Panc1 (cell line): ENCODE measurements at regions of chr17 and their contacts with region 1.

Region 1: GRCh38 chr17:42997984-42998938 is at the start of gene RPL27:
- DNase-seq: peak; percentile 94
- ATAC-seq: peak; percentile 98
- H3K4me3 ChIP-seq: peak within 1 kb of the TSS; percentile 79 to 96
- H3K27ac ChIP-seq: peak within 1 kb of the TSS; percentile 92
- H3K4me1 ChIP-seq: peaks cover 19% of the 10 kb centered on the region
- H3K27me3 ChIP-seq: no peaks in the 10 kb centered on the region
- CTCF ChIP-seq: peak; percentile 76
- total RNA-seq, gene RPL27: 513 TPM

Region 2: GRCh38 chr17:42744806-42745617 is 253.2 kb before region 1 on chr17 and contains the start of gene EZH1:
- CTCF ChIA-PET with region 1: no interaction called
- POLR2A ChIA-PET with region 1: no interaction called
- in situ Hi-C with region 1: no loop called
- intact Hi-C with region 1: no loop called
- DNase-seq: no peak
- ATAC-seq: peak; percentile 96
- H3K4me3 ChIP-seq: peak within 1 kb of the TSS; percentile 58 to 70
- H3K27ac ChIP-seq: peak within 1 kb of the TSS; percentile 79
- H3K4me1 ChIP-seq: no peaks in the 10 kb centered on the region
- H3K27me3 ChIP-seq: no peaks in the 10 kb centered on the region
- CTCF ChIP-seq: no peak
- total RNA-seq, gene EZH1: 17.7 TPM

Region 3: GRCh38 chr17:42975265-42975664 is 23.0 kb before region 1 on chr17:
- CTCF ChIA-PET with region 1: no interaction called
- POLR2A ChIA-PET with region 1: interaction called, 10 read pairs
- in situ Hi-C with region 1: no loop called
- intact Hi-C with region 1: no loop called
- DNase-seq: no peak
- ATAC-seq: no peak
- H3K4me3 ChIP-seq: no peak overlapping the region
- H3K27ac ChIP-seq: no peak overlapping the region
- H3K4me1 ChIP-seq: peaks cover 5% of the 10 kb centered on the region; the same call in 1 of the 2 replicates
- H3K27me3 ChIP-seq: no peaks in the 10 kb centered on the region
- CTCF ChIP-seq: no peak